ENCODE measurements at regions of chr22 and their contacts with region 1.

Region 1: GRCh38 chr22:43945632-43946383 is 9.4 kb upstream of the SAMM50 start:
- DNase-seq: no peak
- H3K4me3 ChIP-seq: no peak overlapping the region
- H3K27me3 ChIP-seq: no peaks in the 10 kb centered on the region
- CTCF ChIP-seq: peak; percentile 81

Region 2: GRCh38 chr22:43857367-43857766 is 88.4 kb before region 1 on chr22:
- CTCF ChIA-PET with region 1: no interaction called
- POLR2A ChIA-PET with region 1: no interaction called
- DNase-seq: no peak
- H3K4me3 ChIP-seq: no peak overlapping the region
- H3K27me3 ChIP-seq: peaks cover 5% of the 10 kb centered on the region
- CTCF ChIP-seq: no peak

Region 3: GRCh38 chr22:43897751-43898261 is 48.0 kb before region 1 on chr22:
- CTCF ChIA-PET with region 1: interaction called, 178 read pairs
- POLR2A ChIA-PET with region 1: no interaction called
- DNase-seq: no peak
- H3K4me3 ChIP-seq: no peak overlapping the region
- H3K27me3 ChIP-seq: no peaks in the 10 kb centered on the region; the same call in 1 of the 2 replicates
- CTCF ChIP-seq: no peak

Region 4: DNA sequence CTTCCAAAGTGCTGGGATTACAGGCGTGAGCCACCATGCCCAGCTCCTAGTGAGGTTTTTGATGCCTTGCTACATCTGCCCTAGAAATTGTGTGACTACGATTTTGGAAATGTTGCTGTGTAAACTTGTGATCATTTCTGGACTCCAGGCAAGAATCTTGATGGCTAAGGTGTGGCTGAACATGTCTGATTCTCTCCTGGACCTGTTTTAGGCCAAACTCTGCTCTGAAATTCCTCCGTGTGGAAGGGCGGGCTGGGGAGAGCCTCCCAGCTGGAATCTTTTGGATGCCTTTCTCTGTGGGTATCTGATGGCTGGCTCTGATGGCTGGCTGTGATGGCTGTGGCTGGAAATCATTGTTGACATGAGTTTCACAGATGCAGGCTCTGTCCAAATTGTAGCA is 14.0 kb before region 1 on chr22:
- CTCF ChIA-PET with region 1: interaction called, 23 read pairs
- POLR2A ChIA-PET with region 1: no interaction called
- DNase-seq: no peak
- H3K4me3 ChIP-seq: no peak overlapping the region
- H3K27me3 ChIP-seq: no peaks in the 10 kb centered on the region
- CTCF ChIP-seq: no peak

Region 5: DNA sequence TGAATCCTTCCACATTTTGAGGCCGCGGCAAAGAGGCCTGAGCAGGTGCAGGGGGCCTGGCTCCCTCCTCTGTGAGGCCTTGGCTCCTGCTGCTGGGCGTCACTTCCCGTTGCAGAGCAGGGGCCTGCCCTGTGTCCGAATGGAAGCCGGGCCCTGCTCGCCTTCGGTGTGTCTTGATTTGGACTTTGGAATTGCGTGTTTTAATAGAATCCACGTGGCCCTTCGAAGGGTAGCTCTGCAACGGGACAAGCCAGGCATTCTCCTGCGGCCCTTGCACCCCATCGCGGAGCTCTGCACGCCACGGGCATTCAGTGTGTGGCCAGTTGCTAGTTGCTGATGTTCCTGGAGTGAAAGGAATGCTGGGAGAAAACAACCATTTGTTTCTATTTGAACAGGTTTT is 35.2 kb after region 1 on chr22:
- CTCF ChIA-PET with region 1: no interaction called
- POLR2A ChIA-PET with region 1: no interaction called
- DNase-seq: no peak
- H3K4me3 ChIP-seq: no peak overlapping the region
- H3K27me3 ChIP-seq: no peaks in the 10 kb centered on the region
- CTCF ChIP-seq: no peak